ENCODE measurements at regions of chr10 and their contacts with region 1.

Region 1: GRCh38 chr10:61896854-61897661 is 4.4 kb upstream of the ARID5B start:
- DNase-seq: peak; percentile 68 to 79
- H3K4me3 ChIP-seq: peak overlapping the region; percentile 19 to 62 (median 53)
- H3K27ac ChIP-seq: no peak overlapping the region
- H3K4me1 ChIP-seq: peaks cover 0 to 15% (median 5%) of the 10 kb centered on the region in 4 experiments; a peak in 4 of 7 replicates
- H3K27me3 ChIP-seq: peaks cover 8 to 36% (median 32%) of the 10 kb centered on the region in 4 experiments
- CTCF ChIP-seq: peak; percentile 43 to 78 (median 69)
- EP300 ChIP-seq: no peak
- POLR2A ChIP-seq: no peak
- RAD21 ChIP-seq: peak; percentile 67 to 72

Region 2: DNA sequence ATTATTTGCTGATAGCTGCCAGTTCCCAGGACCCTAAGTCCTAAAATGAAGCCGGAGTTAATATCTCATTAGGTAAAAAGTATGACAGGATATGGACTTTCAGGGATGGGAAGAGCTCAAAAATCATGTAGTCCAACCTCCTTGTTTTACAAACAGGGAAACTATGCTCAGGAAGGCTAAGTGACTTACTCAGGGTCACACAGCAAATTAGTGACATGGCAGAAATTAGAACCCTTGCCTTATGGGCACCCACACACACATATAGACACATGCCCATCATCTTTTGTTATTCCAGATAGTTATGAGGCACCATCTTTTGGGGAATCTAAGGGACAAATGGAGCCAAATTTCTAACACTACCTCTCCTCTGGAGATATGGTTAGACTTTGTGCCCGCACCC is 86.8 kb before region 1 on chr10:
- CTCF ChIA-PET with region 1: no interaction called
- POLR2A ChIA-PET with region 1: no interaction called
- DNase-seq: no peak
- H3K4me3 ChIP-seq: no peak overlapping the region
- H3K27ac ChIP-seq: no peak overlapping the region
- H3K4me1 ChIP-seq: no peaks in the 10 kb centered on the region
- H3K27me3 ChIP-seq: no peaks in the 10 kb centered on the region
- CTCF ChIP-seq: no peak
- EP300 ChIP-seq: no peak
- POLR2A ChIP-seq: no peak
- RAD21 ChIP-seq: no peak

Region 3: GRCh38 chr10:61869774-61870525 is 27.1 kb before region 1 on chr10:
- CTCF ChIA-PET with region 1: interaction called, 14 read pairs
- POLR2A ChIA-PET with region 1: no interaction called
- DNase-seq: no peak
- H3K4me3 ChIP-seq: no peak overlapping the region
- H3K27ac ChIP-seq: no peak overlapping the region
- H3K4me1 ChIP-seq: no peaks in the 10 kb centered on the region
- H3K27me3 ChIP-seq: no peaks in the 10 kb centered on the region; a peak in 1 of 7 replicates
- CTCF ChIP-seq: no peak
- EP300 ChIP-seq: no peak
- POLR2A ChIP-seq: no peak
- RAD21 ChIP-seq: no peak

Region 4: GRCh38 chr10:61882621-61883373 is 14.3 kb before region 1 on chr10:
- CTCF ChIA-PET with region 1: interaction called, 28 read pairs
- POLR2A ChIA-PET with region 1: no interaction called
- DNase-seq: no peak
- H3K4me3 ChIP-seq: no peak overlapping the region
- H3K27ac ChIP-seq: no peak overlapping the region
- H3K4me1 ChIP-seq: no peaks in the 10 kb centered on the region
- H3K27me3 ChIP-seq: no peaks in the 10 kb centered on the region
- CTCF ChIP-seq: no peak
- EP300 ChIP-seq: no peak
- POLR2A ChIP-seq: no peak
- RAD21 ChIP-seq: no peak

Measured in H1 (cell line).